ENCODE measurements at regions of chr18 and their contacts with region 1.

Region 1: DNA sequence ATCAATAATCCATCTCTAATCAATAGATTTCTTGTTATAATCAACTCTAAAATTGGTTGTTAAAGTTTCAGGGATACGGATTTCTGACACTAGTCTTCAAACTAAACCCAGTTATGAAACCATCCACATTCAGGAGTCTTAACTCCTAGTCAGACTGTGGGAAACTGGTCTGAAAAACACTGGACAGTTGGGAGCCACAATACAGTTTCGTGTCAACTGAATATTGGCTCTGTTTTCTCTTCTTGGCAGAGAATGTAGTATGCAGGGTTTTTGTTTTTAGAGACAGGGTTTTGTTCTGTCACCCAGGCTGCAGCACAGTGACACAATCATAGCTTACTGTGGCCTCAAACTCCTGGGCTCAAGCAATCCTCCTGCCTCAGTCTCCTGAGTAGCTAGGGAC is 123.1 kb downstream of the RTTN start:
- DNase-seq: no peak
- H3K4me3 Mint-ChIP-seq: no peak overlapping the region
- H3K27ac Mint-ChIP-seq: no peak overlapping the region
- H3K4me1 Mint-ChIP-seq: no peaks in the 10 kb centered on the region
- H3K27me3 Mint-ChIP-seq: no peaks in the 10 kb centered on the region

Region 2: DNA sequence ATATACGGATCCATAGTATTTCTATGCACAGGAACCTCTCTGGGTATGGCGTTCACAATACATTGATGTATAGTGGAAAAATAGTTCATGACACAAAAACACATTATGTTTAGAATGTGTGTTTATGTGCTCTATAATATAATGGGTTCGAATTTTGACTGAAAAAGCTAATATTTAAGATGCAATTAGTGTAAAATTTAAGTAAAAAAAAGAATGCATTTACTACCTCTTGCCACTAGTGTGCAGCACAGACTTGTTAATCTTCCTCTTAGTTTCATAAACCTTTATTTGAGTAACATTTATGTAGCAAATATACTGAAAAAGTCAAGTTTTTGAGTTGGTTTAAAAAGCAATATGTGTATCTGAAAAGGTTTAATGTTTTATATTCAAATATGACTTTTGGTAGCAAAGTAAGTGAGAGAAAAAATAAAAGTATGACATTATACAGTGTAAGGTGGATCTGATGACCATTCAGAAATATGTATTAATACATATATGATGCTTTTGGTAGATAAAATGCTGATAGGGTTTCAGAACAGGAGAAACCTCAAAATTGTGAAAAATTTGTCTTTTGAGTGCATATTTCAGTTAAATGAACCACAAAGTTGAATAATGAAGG is 1235.1 kb before region 1 on chr18:
- intact Hi-C with region 1: loop called (anchors 1 kb)
- DNase-seq: no peak
- H3K4me3 Mint-ChIP-seq: no peak overlapping the region
- H3K27ac Mint-ChIP-seq: no peak overlapping the region
- H3K4me1 Mint-ChIP-seq: no peaks in the 10 kb centered on the region
- H3K27me3 Mint-ChIP-seq: no peaks in the 10 kb centered on the region

Region 3: GRCh38 chr18:69400253-69400975 is 682.0 kb before region 1 on chr18 and contains the start of gene DOK6:
- intact Hi-C with region 1: loop called (anchors 10 kb)
- DNase-seq: no peak
- H3K4me3 Mint-ChIP-seq: peak within 1 kb of the TSS; percentile 68
- H3K27ac Mint-ChIP-seq: no peak within 1 kb of the TSS
- H3K4me1 Mint-ChIP-seq: peaks cover 7% of the 10 kb centered on the region
- H3K27me3 Mint-ChIP-seq: peaks cover 66% of the 10 kb centered on the region
- total RNA-seq, gene DOK6: not detected in 2 replicates

Region 4: DNA sequence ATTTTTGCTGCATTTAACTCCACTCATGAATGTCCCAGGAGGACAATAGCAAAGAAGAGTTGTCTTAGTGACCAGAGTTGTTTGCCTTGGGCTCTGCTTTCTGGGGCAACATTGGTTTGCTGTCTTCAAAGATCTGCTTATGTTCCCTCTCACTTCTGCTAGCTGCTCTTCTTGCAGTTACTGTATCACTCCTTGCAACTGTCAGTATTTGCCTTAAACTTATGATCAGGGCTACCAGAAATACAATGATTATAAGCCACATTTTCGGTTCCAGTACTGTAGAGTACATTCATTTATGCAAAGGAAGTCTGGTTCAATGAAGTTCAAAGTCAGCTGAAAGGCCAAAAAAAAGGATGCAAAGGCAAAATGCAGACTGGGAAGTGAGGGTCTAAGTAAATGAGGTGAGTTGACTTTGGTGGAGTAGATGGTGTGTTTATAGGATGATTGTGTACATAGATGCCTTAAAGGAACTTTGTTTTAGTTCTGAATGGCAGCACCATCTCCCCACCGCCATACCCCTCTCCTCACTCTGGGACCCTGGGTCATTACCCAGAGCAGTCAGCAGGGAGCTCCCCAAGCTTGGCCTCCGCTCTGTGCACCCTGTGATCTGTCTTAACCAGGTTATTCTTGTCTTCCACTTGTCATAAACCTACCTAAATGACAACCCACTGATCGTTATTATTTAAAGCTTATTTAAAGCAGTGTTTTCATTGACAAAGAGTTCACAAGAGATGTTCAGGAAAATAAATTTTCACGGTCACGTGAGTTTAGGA is 445.7 kb before region 1 on chr18:
- intact Hi-C with region 1: loop called (anchors 1 kb)
- DNase-seq: no peak
- H3K4me3 Mint-ChIP-seq: no peak overlapping the region
- H3K27ac Mint-ChIP-seq: no peak overlapping the region
- H3K4me1 Mint-ChIP-seq: no peaks in the 10 kb centered on the region
- H3K27me3 Mint-ChIP-seq: peaks cover 6% of the 10 kb centered on the region

Region 5: DNA sequence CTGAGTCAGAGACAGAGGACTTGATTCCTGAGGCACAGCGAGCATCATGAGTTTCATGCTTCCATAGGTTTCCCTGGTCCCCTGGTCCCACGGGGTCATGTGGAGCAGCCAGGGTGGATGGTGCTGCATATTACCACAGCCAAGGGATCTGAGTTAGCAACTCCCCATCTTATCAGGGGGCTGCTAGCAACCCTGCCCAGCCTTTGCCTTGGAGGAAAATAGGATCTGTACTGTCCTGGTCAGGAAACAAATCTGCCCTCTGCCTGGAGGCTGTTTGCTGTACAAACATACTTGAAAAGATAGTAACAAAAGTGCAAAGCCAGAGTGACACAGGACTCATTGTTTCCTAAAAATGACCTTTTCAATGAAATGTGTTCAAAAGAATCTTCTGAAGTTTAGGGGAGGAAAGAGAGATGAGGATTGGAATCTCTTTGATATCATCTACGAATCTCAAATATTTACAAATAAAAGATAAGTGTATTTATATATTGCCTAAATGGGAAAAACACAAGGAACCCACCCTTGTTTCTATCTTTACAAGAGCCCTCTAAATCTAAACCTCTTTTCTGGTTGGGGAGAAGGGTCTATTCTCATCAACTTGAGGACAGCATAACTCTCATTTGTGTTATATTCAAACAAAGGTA is 329.6 kb before region 1 on chr18:
- intact Hi-C with region 1: no loop called
- DNase-seq: no peak
- H3K4me3 Mint-ChIP-seq: no peak overlapping the region
- H3K27ac Mint-ChIP-seq: no peak overlapping the region
- H3K4me1 Mint-ChIP-seq: peaks cover 17% of the 10 kb centered on the region
- H3K27me3 Mint-ChIP-seq: no peaks in the 10 kb centered on the region

Region 6: GRCh38 chr18:69935319-69936190 is 146.9 kb before region 1 on chr18:
- intact Hi-C with region 1: loop called (anchors 5 kb)
- DNase-seq: peak; percentile 80
- H3K4me3 Mint-ChIP-seq: no peak overlapping the region
- H3K27ac Mint-ChIP-seq: no peak overlapping the region
- H3K4me1 Mint-ChIP-seq: peaks cover 28% of the 10 kb centered on the region
- H3K27me3 Mint-ChIP-seq: peaks cover 2% of the 10 kb centered on the region

Region 7: GRCh38 chr18:70578480-70578879 is 496.1 kb after region 1 on chr18:
- intact Hi-C with region 1: no loop called
- DNase-seq: no peak
- H3K4me3 Mint-ChIP-seq: no peak overlapping the region
- H3K27ac Mint-ChIP-seq: no peak overlapping the region
- H3K4me1 Mint-ChIP-seq: no peaks in the 10 kb centered on the region
- H3K27me3 Mint-ChIP-seq: no peaks in the 10 kb centered on the region

Region 8: GRCh38 chr18:70981400-70982140 is 899.1 kb after region 1 on chr18:
- intact Hi-C with region 1: no loop called
- DNase-seq: no peak
- H3K4me3 Mint-ChIP-seq: no peak overlapping the region
- H3K27ac Mint-ChIP-seq: no peak overlapping the region
- H3K4me1 Mint-ChIP-seq: no peaks in the 10 kb centered on the region
- H3K27me3 Mint-ChIP-seq: no peaks in the 10 kb centered on the region